Activated CD4-positive, alpha-beta memory T cell treated with anti-CD3 and anti-CD28 coated beads, Interleukin-2, amount 10 ng/mL, durations not matched to agents 7 days and 5 days (primary cell): ENCODE measurements at regions of chr7 and their contacts with region 1.

Region 1: GRCh38 chr7:8176370-8177081 is 85.4 kb downstream of the ICA1 start:
- DNase-seq: peak; percentile 78
- H3K4me3 Mint-ChIP-seq: peak overlapping the region; percentile 58
- H3K27ac Mint-ChIP-seq: peak overlapping the region; percentile 99
- H3K4me1 Mint-ChIP-seq: peaks cover 51% of the 10 kb centered on the region
- H3K27me3 Mint-ChIP-seq: no peaks in the 10 kb centered on the region

Region 2: DNA sequence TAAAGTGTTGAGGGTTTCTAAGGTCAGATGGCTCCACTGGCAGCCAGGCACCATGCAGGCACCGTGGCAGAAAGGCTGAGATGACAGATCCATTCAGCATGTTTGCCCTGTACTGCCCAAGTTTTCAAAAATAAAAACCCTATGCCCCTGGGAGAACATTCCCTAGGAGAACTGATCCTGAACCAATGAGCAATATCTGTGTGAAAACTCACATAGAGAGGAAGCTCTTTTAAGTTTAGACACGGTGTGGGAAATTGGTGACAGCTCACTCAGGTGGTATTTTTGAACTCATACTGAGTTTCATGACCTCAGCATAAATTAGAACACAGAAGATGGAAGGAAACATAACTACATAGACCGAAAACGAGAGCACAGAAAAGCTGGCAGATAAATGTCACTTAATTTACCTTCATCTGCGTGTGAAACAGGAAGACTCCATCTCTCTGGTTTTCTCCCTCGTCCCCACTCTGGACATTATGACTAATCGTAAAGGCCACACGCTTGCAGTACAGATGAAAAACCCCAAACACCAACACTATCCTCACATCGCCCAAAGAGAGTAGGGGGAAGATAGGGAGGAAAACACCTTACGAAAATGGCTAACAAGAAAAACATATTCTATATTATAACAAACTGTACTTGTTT is 42.3 kb before region 1 on chr7:
- CTCF ChIA-PET with region 1: no interaction called
- POLR2A ChIA-PET with region 1: interaction called, 11 read pairs
- DNase-seq: peak; percentile 46
- H3K4me3 Mint-ChIP-seq: peak overlapping the region; percentile 15
- H3K27ac Mint-ChIP-seq: peak overlapping the region; percentile 82
- H3K4me1 Mint-ChIP-seq: peaks cover 55% of the 10 kb centered on the region
- H3K27me3 Mint-ChIP-seq: no peaks in the 10 kb centered on the region

Region 3: GRCh38 chr7:8149222-8149621 is 27.3 kb before region 1 on chr7:
- CTCF ChIA-PET with region 1: interaction called, 3 read pairs
- POLR2A ChIA-PET with region 1: interaction called, 10 read pairs
- DNase-seq: no peak
- H3K4me3 Mint-ChIP-seq: no peak overlapping the region
- H3K27ac Mint-ChIP-seq: peak overlapping the region; percentile 16
- H3K4me1 Mint-ChIP-seq: peaks cover 19% of the 10 kb centered on the region
- H3K27me3 Mint-ChIP-seq: peaks cover 4% of the 10 kb centered on the region

Region 4: DNA sequence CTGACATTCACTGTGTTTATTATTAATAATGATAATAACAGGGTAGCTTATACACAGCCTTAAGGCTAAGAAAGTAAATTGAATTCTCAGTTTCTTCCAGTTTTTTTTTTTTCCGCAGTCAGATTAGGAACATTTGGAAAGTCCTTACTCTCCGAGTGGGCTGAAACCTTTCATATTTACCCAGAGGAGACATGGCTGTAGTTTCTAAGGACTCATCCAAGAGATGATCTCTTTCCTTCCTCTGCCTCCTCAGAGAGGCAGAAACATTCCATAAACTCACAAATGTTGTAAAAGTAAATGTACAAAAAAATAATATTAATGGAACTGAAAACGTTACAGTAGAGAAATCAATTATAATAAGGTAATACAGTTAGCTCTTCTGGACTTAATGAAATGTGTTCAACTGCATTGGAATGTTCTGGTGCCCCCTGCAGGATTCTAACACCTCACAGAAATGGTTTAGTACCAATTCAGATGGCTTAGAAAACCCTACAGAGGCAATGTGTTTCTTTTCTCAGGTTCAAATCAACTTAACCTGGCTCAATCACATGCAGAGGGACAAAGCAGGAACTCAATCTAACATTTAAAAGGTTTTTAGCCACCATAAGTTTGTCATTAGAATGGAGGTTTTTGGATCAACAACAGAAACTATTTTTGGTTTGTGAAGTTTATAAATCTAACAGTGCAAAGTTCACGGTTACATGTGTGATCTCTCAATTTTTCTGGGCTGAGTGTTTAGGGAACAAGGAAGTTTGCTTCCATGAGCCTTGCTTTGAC is 13.8 kb after region 1 on chr7:
- CTCF ChIA-PET with region 1: interaction called, 4 read pairs
- POLR2A ChIA-PET with region 1: interaction called, 11 read pairs
- DNase-seq: peak; percentile 69
- H3K4me3 Mint-ChIP-seq: no peak overlapping the region
- H3K27ac Mint-ChIP-seq: no peak overlapping the region
- H3K4me1 Mint-ChIP-seq: peaks cover 30% of the 10 kb centered on the region
- H3K27me3 Mint-ChIP-seq: peaks cover 3% of the 10 kb centered on the region

Region 5: DNA sequence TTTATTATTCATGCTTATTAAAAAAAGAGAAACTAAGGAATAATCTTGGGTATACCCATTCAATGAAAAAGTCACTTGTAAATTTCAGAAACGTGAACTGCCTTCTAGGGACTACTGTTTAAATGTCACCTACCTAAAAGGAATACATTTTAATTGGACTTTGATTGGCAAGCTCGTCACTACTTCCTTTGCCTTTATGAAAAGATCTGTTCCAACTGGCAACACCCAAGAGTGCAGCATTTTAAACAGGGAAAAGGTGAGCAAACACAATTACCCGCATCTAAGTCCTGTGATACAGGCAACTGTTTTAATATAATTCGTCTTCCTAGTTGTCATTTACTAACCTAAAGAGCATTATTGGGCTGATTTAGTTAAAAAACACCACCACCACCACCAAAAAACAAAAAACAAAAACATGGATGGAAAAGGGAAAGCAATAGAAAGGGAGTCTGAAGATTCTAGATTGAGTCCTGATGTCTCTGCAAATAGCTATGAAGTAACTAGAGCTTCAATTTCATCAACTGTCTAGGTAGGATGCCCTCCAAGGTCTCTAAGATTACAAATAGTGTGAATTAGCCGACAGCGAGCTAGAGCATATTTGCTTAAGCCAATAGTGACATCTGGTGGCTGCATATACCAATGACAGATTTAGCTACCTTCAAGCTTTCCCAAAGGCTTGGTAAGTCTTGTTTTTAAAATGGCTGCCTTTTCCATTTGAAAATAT is 119.3 kb after region 1 on chr7:
- CTCF ChIA-PET with region 1: no interaction called
- POLR2A ChIA-PET with region 1: no interaction called
- DNase-seq: peak; percentile 24
- H3K4me3 Mint-ChIP-seq: no peak overlapping the region
- H3K27ac Mint-ChIP-seq: no peak overlapping the region
- H3K4me1 Mint-ChIP-seq: peaks cover 2% of the 10 kb centered on the region
- H3K27me3 Mint-ChIP-seq: peaks cover 15% of the 10 kb centered on the region

Region 6: DNA sequence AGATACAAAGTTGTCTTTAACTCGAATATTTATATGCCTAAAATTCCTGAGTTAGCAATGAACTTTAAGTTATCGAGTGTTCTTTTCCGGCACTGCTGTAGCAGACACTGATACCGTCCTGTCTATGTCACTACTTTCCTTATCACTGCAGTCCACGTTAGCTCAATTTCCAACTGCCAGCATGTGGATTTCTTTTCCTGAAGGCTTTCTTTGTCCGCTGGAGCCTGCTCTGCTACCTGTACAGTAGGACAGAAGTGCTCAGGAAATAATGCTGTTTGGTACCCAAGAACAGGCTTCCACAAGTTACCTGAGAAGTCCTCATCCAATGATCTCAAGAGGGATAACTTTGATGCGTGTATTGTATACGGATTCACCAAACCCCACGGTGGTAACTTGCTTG is 586.3 kb after region 1 on chr7:
- CTCF ChIA-PET with region 1: no interaction called
- POLR2A ChIA-PET with region 1: no interaction called
- DNase-seq: no peak
- H3K4me3 Mint-ChIP-seq: no peak overlapping the region
- H3K27ac Mint-ChIP-seq: no peak overlapping the region
- H3K4me1 Mint-ChIP-seq: no peaks in the 10 kb centered on the region
- H3K27me3 Mint-ChIP-seq: no peaks in the 10 kb centered on the region